ENCODE measurements at regions of chr20 and their contacts with region 1.

Region 1: DNA sequence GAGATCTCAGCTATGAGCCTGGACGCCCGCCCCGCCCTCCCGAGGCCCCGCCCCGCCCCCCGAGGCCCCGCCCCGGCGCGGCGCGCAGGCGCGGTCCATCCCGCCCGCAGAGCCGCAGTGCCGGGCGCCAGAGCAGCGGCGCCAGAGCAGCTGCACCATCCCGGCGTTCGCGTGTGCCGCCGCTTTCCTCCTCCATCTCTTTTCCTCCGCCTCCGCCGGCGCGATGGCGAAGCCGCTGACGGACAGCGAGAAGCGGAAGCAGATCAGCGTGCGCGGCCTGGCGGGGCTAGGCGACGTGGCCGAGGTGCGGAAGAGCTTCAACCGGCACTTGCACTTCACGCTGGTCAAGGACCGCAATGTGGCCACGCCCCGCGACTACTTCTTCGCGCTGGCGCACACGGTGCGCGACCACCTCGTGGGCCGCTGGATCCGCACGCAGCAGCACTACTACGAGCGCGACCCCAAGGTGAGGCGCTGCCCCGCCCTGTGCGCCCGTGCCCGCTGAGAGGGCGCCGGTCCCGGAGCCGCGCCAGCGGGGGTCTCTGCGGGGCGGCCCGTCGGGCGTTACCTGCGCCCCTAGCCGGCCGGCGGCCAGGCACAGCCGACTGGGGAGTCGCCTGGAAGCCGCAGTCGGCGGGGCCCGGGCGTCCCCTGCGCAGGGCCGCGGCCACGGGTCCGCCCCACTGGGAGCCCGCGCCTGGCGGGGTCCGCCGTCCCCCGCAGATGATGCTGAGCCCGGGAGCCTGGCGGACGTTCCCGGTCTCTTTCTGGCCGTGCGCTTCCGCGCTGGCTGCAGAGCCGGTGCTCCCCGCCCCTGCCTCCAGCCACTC is at the start of gene PYGB:
- DNase-seq: peak; percentile 78
- H3K4me3 Mint-ChIP-seq: peak within 1 kb of the TSS; percentile 93
- H3K27ac Mint-ChIP-seq: peak within 1 kb of the TSS; percentile 77
- H3K4me1 Mint-ChIP-seq: peaks cover 33% of the 10 kb centered on the region
- H3K27me3 Mint-ChIP-seq: no peaks in the 10 kb centered on the region
- CTCF ChIP-seq: no peak
- total RNA-seq, gene PYGB: 375 and 435 TPM in 2 replicates

Region 2: DNA sequence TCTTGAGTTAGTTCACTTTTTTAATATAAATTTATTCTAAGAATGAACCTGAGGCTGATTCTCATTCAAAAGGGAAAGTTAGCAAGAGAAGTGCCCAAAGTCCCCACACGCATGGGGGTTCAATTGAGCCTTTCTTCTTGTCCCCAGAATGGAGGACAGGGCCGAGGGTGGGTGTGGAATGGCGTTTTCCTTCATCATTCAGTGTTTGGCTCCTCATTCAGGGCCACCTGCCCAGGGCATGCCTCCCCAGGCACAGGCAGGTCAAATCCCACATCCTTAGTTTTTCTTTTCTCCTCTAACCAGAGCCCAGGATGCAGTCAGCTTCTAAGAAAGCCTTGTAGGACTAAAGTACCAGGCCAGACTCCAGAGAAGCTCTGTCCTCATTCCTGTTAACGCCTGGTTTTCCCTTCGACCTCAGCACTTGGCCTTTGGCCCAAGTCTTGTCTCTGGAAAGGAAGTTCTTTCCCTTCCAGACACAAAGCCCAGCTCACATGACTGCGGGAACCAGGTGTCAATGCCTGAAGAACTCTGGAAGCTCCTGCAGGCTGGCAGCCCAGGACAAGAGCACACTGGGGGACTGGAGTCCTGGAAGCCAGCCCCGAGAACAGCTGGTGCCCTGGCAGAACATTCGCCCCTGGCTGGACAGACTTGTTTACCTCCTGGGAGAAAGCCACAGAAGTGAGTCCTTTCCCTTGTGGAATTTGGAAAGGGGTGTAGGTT is 208.6 kb before region 1 on chr20:
- CTCF ChIA-PET with region 1: interaction called, 3 read pairs
- POLR2A ChIA-PET with region 1: interaction called, 11 read pairs
- intact Hi-C with region 1: no loop called
- DNase-seq: peak; percentile 90
- H3K4me3 Mint-ChIP-seq: peak overlapping the region; percentile 25
- H3K27ac Mint-ChIP-seq: peak overlapping the region; percentile 81
- H3K4me1 Mint-ChIP-seq: peaks cover 20% of the 10 kb centered on the region
- H3K27me3 Mint-ChIP-seq: peaks cover 11% of the 10 kb centered on the region
- CTCF ChIP-seq: no peak

Region 3: DNA sequence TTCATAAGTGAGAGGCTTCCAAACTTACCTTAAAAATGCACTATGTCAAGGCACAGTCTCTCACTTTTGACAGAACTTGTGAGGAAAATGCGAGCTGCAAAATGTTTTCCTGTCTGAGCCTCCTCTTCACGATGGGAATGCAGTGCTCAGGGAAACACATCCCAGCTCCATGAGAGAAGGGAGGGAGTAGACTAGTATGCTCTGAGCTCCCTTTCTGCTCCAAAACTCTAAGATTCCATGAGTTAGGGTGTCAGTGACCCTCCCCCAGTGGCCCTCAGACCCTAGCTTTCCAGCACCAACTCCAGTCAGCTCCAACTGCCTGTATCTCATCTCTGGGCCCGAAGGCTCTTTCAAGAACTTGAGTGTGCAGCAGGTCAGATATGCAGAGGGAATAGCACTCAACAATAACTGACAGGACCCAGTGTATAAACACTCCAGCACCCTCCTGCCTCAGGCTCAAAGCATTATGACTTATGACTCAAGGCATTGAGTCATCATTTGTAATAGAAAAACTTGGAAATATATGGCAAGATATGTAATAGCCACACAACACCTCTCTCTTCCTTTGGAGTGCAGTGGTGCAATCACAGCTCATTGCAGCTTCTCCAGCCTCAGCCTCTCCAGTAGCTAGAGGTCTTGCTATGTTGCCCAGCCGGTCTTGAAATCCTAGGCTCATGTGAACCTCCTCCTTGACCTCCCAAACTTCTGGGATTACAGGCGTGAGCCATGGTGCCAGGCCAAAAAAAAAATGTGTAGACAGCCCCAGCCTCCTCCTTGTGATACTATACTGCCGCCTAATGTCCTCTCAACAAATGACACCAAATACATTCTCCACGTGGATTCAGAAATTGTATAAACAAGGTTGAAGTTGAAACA is 69.4 kb before region 1 on chr20:
- CTCF ChIA-PET with region 1: interaction called, 11 read pairs
- POLR2A ChIA-PET with region 1: interaction called, 60 read pairs
- intact Hi-C with region 1: loop called (anchors 2 kb)
- DNase-seq: peak; percentile 96
- H3K4me3 Mint-ChIP-seq: no peak overlapping the region
- H3K27ac Mint-ChIP-seq: peak overlapping the region; percentile 0
- H3K4me1 Mint-ChIP-seq: peaks cover 27% of the 10 kb centered on the region
- H3K27me3 Mint-ChIP-seq: no peaks in the 10 kb centered on the region
- CTCF ChIP-seq: peak; percentile 77

Region 4: GRCh38 chr20:25223179-25223661 is 25.0 kb before region 1 on chr20:
- CTCF ChIA-PET with region 1: interaction called, 92 read pairs
- POLR2A ChIA-PET with region 1: interaction called, 517 read pairs
- intact Hi-C with region 1: loop called (anchors 1 kb)
- DNase-seq: peak; percentile 97
- H3K4me3 Mint-ChIP-seq: peak overlapping the region; percentile 29
- H3K27ac Mint-ChIP-seq: peak overlapping the region; percentile 82
- H3K4me1 Mint-ChIP-seq: peaks cover 23% of the 10 kb centered on the region
- H3K27me3 Mint-ChIP-seq: no peaks in the 10 kb centered on the region
- CTCF ChIP-seq: no peak

Region 5: DNA sequence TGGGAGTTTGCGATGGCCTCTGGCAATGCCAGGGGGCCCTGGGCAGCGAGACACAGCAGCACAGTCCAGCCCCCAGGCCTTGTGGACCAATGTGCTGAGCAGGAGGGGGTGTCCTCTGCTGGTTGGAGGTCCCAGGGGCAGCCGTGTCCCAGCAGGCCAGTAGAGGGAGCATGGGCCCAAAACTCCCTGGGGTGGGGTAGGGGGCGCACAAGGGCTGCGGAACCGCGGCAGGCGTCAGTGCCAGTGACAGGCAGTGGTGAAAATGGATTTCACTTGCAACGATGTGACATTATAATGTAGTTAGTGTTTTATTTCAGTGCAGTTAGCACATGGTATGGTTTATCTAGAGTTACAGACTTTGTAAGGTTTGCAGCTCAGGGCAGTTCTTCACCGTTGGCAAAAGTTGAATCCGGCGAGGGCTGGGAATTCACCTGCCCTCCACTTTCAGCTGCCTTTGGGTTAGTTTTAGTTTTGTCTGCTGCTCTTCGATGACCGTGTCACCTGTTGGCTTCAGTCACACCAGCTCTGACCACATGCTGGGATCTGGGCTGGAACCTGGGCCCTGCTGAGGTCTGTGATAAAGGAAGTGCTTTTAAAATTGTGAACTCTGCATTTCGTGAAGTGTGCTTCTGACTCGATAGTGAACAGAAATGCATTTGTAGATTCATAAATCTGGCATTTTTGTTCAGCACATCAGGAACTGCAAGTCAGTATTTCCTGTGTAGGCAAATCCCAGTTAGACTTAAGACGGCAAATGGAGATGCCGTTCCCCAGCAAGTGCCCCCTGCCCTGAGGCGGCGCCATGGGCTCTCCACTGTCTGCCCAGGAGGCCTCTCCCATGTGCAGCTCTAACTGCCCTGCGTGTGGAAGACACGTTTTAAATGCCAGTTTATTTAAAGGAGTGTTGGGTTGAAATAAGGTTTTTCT is 46.6 kb after region 1 on chr20:
- CTCF ChIA-PET with region 1: interaction called, 27 read pairs
- POLR2A ChIA-PET with region 1: interaction called, 93 read pairs
- intact Hi-C with region 1: no loop called
- DNase-seq: peak; percentile 28
- H3K4me3 Mint-ChIP-seq: no peak overlapping the region
- H3K27ac Mint-ChIP-seq: peak overlapping the region; percentile 75
- H3K4me1 Mint-ChIP-seq: peaks cover 9% of the 10 kb centered on the region
- H3K27me3 Mint-ChIP-seq: no peaks in the 10 kb centered on the region
- CTCF ChIP-seq: peak; percentile 49

Region 6: GRCh38 chr20:25399037-25399430 is 150.9 kb after region 1 on chr20:
- CTCF ChIA-PET with region 1: interaction called, 9 read pairs
- POLR2A ChIA-PET with region 1: interaction called, 34 read pairs
- intact Hi-C with region 1: loop called (anchors 5 kb)
- DNase-seq: peak; percentile 76
- H3K4me3 Mint-ChIP-seq: no peak overlapping the region
- H3K27ac Mint-ChIP-seq: no peak overlapping the region
- H3K4me1 Mint-ChIP-seq: no peaks in the 10 kb centered on the region
- H3K27me3 Mint-ChIP-seq: no peaks in the 10 kb centered on the region
- CTCF ChIP-seq: peak; percentile 62

Region 7: GRCh38 chr20:25496968-25497640 is 248.9 kb after region 1 on chr20:
- CTCF ChIA-PET with region 1: no interaction called
- POLR2A ChIA-PET with region 1: no interaction called
- intact Hi-C with region 1: no loop called
- DNase-seq: peak; percentile 67
- H3K4me3 Mint-ChIP-seq: no peak overlapping the region
- H3K27ac Mint-ChIP-seq: no peak overlapping the region
- H3K4me1 Mint-ChIP-seq: peaks cover 5% of the 10 kb centered on the region
- H3K27me3 Mint-ChIP-seq: peaks cover 3% of the 10 kb centered on the region
- CTCF ChIP-seq: no peak

Region 8: GRCh38 chr20:25654487-25654886 is 406.3 kb after region 1 on chr20:
- CTCF ChIA-PET with region 1: no interaction called
- POLR2A ChIA-PET with region 1: no interaction called
- intact Hi-C with region 1: no loop called
- DNase-seq: peak; percentile 72
- H3K4me3 Mint-ChIP-seq: no peak overlapping the region
- H3K27ac Mint-ChIP-seq: peak overlapping the region; percentile 20
- H3K4me1 Mint-ChIP-seq: no peaks in the 10 kb centered on the region
- H3K27me3 Mint-ChIP-seq: no peaks in the 10 kb centered on the region
- CTCF ChIP-seq: no peak

Measured in MCF 10A (cell line).